Activated CD4-positive, alpha-beta T cell treated with anti-CD3 and anti-CD28 coated beads, Interleukin-2, amount 10 ng/mL, durations not matched to agents 24 days and 14 days (primary cell): ENCODE measurements at regions of chr15 and their contacts with region 1.

Region 1: DNA sequence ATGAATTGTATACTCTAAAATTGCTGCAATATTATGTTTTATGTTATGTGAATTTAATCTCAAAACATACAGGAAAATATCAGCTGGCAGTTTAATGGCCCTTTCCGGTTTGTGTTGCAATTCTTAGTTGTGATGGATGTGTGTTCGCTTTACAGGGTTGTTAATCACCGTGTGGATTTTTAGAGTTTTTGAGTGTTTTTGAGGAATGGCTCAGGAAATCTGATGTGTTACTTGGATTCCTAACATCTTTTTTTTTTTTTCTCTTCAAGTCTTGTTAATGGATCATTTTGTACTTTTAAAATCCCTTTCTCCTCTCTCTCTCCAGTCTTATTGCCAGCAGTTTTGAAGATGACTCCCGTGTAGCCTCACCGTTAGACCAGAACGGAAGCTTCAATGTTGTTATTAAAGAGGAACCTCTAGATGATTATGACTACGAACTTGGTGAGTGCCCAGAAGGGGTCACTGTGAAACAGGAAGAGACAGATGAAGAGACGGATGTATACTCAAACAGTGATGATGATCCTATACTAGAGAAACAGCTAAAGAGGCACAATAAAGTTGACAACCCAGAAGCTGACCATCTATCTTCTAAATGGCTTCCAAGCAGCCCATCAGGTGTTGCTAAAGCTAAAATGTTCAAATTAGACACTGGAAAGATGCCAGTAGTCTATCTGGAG is 35.7 kb downstream of the MGA start:
- DNase-seq: peak; percentile 86
- H3K4me3 Mint-ChIP-seq: peak overlapping the region; percentile 53
- H3K27ac Mint-ChIP-seq: peak overlapping the region; percentile 81
- H3K4me1 Mint-ChIP-seq: peaks cover 31% of the 10 kb centered on the region
- H3K27me3 Mint-ChIP-seq: no peaks in the 10 kb centered on the region

Region 2: GRCh38 chr15:41483115-41483514 is 212.8 kb before region 1 on chr15:
- intact Hi-C with region 1: loop called (anchors 10 kb)
- DNase-seq: peak; percentile 87
- H3K4me3 Mint-ChIP-seq: peak overlapping the region; percentile 56
- H3K27ac Mint-ChIP-seq: peak overlapping the region; percentile 63
- H3K4me1 Mint-ChIP-seq: peaks cover 27% of the 10 kb centered on the region
- H3K27me3 Mint-ChIP-seq: peaks cover 2% of the 10 kb centered on the region

Region 3: DNA sequence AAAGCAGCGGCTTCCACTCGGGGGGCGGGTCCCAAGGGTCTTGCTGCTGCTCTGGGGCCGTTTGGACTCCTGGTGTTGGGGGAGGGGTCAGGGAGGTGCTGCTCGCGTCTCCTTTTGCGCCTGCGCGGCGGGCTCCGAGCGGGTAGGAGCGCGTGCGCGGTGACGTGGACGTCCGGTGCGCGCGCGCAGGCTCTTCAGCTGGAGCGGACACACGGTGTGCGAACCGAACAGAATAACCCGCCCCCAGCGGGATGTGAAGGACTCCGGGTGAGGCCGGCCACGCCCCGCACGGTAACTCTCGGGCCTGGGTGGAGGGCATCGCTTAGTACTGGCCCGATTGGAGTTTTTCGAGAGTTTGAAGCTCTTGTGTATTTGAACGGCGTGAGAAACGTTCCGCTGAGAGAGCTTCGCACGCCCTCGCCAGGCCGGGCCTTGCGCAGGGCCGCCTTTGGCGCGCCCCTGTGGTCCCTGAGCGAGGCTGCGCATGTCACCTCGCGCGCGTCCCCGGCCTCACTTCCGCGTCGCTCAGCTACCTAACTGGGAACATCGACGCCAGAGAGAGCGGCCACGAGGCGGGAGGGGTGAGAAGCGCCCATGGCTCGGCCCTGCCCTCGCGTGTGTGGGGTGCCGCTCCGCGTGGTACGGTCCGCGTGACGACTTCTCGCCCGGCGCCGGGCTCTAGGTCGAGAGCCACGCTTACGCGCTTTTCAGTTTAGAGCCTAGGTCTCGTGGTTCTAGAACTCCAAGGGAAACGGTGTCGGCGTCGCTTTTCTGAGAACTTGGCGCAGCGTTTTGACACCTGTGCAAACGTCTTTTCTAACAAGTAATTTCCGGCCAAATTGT is 35.4 kb before region 1 on chr15 and contains the start of gene MGA:
- intact Hi-C with region 1: loop called (anchors 2 kb)
- DNase-seq: peak; percentile 97
- H3K4me3 Mint-ChIP-seq: peak within 1 kb of the TSS; percentile 88
- H3K27ac Mint-ChIP-seq: peak within 1 kb of the TSS; percentile 89
- H3K4me1 Mint-ChIP-seq: peaks cover 30% of the 10 kb centered on the region
- H3K27me3 Mint-ChIP-seq: peaks cover 18% of the 10 kb centered on the region
- total RNA-seq, gene MGA: 36.0 and 37.7 TPM in 2 replicates

Region 4: DNA sequence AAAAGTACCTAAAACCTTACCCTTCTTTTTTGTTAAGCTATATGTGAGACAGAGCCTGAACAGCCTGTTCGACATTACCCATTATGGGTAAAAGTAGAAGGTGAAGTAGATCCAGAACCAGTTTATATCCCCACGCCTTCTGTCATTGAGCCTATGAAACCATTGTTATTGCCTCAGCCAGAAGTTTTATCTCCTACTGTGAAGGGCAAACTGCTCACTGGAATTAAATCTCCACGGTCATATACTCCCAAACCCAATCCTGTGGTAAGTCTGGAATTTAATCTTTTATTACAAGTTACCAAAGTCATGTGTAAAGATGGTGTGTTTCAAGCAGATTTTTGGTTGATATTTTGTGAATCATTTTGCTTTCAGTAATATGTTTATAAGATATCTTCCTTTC is 31.3 kb after region 1 on chr15:
- intact Hi-C with region 1: no loop called
- DNase-seq: no peak
- H3K4me3 Mint-ChIP-seq: no peak overlapping the region
- H3K27ac Mint-ChIP-seq: no peak overlapping the region
- H3K4me1 Mint-ChIP-seq: no peaks in the 10 kb centered on the region
- H3K27me3 Mint-ChIP-seq: no peaks in the 10 kb centered on the region

Region 5: DNA sequence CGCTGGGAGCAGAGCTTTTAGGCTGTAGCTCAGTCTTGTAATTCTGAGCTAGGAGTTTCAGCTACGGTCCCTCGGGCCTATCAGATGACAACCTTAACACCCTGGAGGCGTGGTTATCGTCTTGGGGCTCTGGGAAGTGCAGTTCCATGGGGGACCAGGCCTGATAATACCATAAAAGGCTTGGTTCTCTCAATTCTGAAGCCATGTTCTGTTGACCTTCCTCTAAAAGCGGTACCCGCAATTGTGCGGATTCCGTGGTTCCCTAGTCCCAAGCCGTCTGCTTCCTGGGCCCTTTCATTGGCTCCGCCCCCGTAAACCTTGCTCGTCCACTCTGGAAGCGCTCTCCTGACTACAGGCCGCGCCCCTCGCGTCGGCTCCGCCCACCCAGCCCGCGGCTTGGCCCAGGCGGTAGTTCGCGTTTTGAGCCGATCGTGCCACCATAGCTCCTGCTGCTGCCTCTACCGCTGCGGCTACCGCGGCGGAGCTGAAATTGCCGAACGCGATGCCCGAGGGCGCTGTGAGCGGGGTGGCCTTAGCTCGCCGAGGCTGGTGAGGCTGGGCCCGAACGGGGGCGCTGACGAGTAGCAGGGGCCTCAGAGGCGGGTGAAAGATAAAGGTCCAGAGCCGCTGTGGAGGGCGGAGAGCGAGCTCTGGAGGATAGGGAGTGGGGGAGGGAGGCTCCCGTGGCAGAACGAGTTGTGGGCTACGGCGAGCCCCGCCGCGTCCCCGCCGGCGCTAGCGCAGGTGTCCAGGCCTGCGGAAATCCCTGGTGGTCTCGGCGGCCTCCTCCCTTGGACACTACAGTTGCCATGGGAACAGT is 78.4 kb after region 1 on chr15 and contains the start of gene MAPKBP1:
- intact Hi-C with region 1: loop called (anchors 1 kb)
- DNase-seq: peak; percentile 100
- H3K4me3 Mint-ChIP-seq: peak within 1 kb of the TSS; percentile 95
- H3K27ac Mint-ChIP-seq: peak within 1 kb of the TSS; percentile 94
- H3K4me1 Mint-ChIP-seq: peaks cover 49% of the 10 kb centered on the region
- H3K27me3 Mint-ChIP-seq: no peaks in the 10 kb centered on the region
- total RNA-seq, gene MAPKBP1: 24.8 and 27.1 TPM in 2 replicates

Region 6: GRCh38 chr15:41811432-41812195 is 115.7 kb after region 1 on chr15:
- intact Hi-C with region 1: loop called (anchors 2 kb)
- DNase-seq: peak; percentile 92
- H3K4me3 Mint-ChIP-seq: no peak overlapping the region
- H3K27ac Mint-ChIP-seq: peak overlapping the region; percentile 20
- H3K4me1 Mint-ChIP-seq: peaks cover 19% of the 10 kb centered on the region
- H3K27me3 Mint-ChIP-seq: no peaks in the 10 kb centered on the region

Region 7: GRCh38 chr15:41827880-41828806 is 132.3 kb after region 1 on chr15 and contains the start of gene JMJD7:
- intact Hi-C with region 1: loop called (anchors 5 kb)
- DNase-seq: peak; percentile 98
- H3K4me3 Mint-ChIP-seq: peak within 1 kb of the TSS; percentile 86
- H3K27ac Mint-ChIP-seq: peak within 1 kb of the TSS; percentile 87
- H3K4me1 Mint-ChIP-seq: peaks cover 38% of the 10 kb centered on the region
- H3K27me3 Mint-ChIP-seq: peaks cover 2% of the 10 kb centered on the region
- total RNA-seq, gene JMJD7: 18.3 and 20.1 TPM in 2 replicates

Region 8: DNA sequence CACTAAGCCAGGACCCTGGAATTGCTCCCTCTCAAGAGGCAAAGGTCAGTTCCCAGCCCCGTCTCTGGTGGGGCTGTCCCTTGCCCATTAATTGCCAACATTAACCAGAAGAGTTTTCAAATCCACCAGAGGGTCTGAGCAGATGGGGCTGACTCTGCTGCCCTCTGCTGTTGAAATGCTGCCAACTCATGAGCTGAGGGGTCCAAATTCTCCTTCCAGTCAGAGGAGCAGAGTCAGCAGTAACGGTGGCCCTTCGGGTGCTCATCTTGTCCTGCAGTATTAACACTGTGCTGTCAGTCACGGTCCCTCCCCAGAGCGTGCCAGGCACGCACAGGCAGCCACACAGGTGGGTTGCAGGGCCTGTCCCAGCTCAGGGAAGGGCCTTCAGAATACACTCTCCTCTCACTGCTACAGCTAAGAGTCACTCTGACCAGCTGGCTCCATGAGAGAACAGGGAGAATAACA is 208.7 kb after region 1 on chr15:
- intact Hi-C with region 1: loop called (anchors 10 kb)
- DNase-seq: peak; percentile 91
- H3K4me3 Mint-ChIP-seq: no peak overlapping the region
- H3K27ac Mint-ChIP-seq: peak overlapping the region; percentile 53
- H3K4me1 Mint-ChIP-seq: peaks cover 10% of the 10 kb centered on the region
- H3K27me3 Mint-ChIP-seq: no peaks in the 10 kb centered on the region